Activated CD4-positive, alpha-beta memory T cell treated with anti-CD3 and anti-CD28 coated beads, Interleukin-2, amount 10 ng/mL, durations not matched to agents 7 days and 5 days (primary cell): ENCODE measurements at regions of chr12 and their contacts with region 1.

Region 1: DNA sequence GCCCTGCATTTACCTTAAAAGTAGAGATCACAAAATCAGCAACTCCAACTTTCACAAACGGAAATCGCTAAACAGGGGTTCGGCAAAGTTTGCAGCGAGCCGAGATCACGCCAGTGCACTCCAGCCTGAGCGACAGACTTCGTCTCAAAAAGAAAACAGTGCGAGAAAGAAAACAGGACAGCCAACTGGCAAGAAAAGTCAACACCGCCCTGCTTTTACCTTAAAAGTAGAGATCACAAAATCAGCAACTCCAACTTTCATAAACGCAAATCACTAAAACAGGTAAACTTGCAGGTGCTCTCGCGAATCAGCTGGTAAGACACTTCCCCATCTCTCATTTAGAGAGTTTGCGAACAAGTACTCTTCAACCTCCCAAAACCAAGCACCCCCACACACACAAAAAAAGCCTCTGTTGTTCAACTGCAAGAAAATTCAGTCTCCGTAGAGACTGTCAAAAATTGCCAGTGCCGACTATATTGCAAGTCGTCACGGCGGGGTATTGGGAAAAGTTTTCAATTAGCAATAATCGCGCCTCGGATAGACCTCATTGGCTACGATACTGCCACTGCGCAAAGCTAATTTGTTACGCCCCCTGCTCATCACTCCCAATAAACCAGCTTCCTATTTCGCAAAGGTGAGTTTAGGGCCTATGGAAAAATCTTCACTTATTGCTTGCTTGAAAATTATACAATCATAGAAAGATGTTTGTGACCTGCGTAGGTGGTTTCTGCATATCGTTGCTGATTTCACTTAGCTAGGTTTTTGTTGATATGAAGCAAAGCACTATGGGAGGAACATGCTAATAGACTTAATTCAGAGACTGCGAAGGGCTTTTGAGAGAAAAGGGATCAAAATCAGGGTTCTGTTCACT is at the start of gene RNU4-1:
- DNase-seq: peak; percentile 84
- H3K4me3 Mint-ChIP-seq: no peak within 1 kb of the TSS
- H3K27ac Mint-ChIP-seq: no peak within 1 kb of the TSS
- H3K4me1 Mint-ChIP-seq: peaks cover 12% of the 10 kb centered on the region
- H3K27me3 Mint-ChIP-seq: peaks cover 7% of the 10 kb centered on the region
- total RNA-seq, gene RNU4-1: 1,910 to 2,156 TPM

Region 2: DNA sequence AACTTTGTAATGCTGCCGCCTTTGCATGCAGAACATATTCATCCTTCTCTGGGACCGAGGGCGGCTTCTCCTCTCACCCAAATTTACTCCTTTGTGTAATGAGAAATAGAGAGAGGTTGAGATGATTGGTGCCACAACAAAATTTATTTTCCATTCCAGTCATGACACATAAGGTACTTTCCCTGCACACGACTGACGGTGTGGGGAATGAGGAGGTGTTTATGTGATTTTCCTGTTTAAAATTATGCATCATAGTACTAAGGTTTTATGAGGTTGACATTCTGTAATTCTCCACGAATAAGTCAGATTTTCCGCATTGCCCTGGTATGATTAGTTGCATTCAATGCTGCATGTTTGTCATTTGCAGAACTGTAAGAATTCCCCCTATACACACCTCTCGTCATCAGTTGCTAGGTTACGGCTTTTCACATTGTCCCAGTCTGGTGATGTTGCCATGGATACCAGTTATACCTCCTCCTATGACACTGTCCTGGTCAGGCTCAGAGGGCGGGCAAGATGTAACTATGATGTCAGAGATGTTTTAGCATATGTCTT is 280.8 kb before region 1 on chr12:
- CTCF ChIA-PET with region 1: no interaction called
- POLR2A ChIA-PET with region 1: interaction called, 19 read pairs
- DNase-seq: peak; percentile 77
- H3K4me3 Mint-ChIP-seq: peak overlapping the region; percentile 60
- H3K27ac Mint-ChIP-seq: peak overlapping the region; percentile 88
- H3K4me1 Mint-ChIP-seq: peaks cover 77% of the 10 kb centered on the region
- H3K27me3 Mint-ChIP-seq: no peaks in the 10 kb centered on the region

Region 3: DNA sequence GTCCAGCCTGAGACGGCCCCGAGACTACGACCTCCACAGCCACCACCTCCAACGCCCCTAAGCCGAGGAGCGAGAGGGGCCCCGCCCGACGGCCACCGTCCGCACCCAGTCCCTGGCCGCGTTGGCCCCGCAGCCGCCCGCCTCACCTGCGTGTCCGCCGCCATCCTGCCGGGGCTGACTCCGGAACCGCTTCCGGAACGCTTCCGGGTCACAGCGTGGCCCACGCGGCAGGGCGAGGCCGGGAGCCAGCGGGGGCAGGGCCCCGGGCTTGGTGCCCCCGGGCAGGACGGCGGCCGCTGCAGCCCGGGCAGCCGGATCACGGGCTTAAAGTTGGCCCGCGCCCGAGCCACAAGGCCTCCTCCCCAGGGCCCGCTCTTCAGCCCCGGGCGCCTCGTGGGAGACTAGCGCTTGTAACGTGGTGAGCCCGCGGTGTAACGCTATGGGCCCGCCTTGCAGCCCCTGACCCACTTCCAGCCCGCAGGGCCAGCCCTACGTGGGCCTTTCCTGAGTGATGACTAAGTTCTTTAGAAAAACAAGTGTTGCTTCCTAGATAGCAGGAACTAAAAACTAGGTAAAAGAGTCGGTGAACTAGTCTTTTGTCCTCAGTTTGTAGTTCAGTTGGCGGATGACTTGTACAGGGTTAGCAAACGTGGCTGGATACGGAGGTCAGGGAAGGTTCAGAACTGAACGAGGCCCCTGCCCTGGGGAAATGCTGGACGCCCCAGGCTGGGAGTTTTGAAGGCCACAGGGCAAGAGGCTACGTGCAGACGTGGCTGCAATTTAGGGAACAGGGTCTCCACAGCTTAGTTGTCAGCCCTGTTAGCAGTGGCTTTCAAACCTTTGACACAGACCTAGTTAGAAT is 98.1 kb before region 1 on chr12 and contains the start of gene GCN1:
- CTCF ChIA-PET with region 1: interaction called, 46 read pairs
- POLR2A ChIA-PET with region 1: interaction called, 349 read pairs
- DNase-seq: peak; percentile 89
- H3K4me3 Mint-ChIP-seq: peak within 1 kb of the TSS; percentile 87
- H3K27ac Mint-ChIP-seq: peak within 1 kb of the TSS; percentile 98
- H3K4me1 Mint-ChIP-seq: peaks cover 65% of the 10 kb centered on the region
- H3K27me3 Mint-ChIP-seq: no peaks in the 10 kb centered on the region
- total RNA-seq, gene GCN1: 86.0 to 94.3 TPM

Region 4: DNA sequence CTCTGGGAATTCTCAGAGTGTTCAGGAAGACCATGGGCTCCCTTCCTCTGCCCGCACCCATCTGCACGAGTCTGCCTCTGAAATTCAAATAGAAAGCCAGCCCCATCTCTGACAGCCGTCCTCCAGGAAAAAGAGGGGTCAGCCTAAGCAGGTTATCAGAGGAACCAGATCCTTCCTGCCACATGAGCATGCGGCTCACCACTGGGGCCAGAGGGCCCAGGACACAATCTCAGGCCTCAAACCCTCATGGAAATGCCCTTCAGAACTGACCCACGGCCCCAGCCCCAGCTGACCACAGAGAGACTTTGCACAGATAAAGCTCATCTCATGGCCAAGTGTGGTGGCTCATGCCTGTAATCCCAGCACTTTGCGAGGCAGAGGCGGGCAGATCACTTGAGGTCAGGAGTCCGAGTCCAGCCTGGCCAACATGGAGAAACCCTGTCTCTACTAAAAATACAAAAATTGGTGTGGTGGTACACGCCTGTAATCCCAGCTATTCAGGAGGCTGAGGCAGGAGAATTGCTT is 50.6 kb before region 1 on chr12:
- CTCF ChIA-PET with region 1: no interaction called
- POLR2A ChIA-PET with region 1: interaction called, 269 read pairs
- DNase-seq: no peak
- H3K4me3 Mint-ChIP-seq: no peak overlapping the region
- H3K27ac Mint-ChIP-seq: no peak overlapping the region
- H3K4me1 Mint-ChIP-seq: peaks cover 69% of the 10 kb centered on the region
- H3K27me3 Mint-ChIP-seq: no peaks in the 10 kb centered on the region

Region 5: DNA sequence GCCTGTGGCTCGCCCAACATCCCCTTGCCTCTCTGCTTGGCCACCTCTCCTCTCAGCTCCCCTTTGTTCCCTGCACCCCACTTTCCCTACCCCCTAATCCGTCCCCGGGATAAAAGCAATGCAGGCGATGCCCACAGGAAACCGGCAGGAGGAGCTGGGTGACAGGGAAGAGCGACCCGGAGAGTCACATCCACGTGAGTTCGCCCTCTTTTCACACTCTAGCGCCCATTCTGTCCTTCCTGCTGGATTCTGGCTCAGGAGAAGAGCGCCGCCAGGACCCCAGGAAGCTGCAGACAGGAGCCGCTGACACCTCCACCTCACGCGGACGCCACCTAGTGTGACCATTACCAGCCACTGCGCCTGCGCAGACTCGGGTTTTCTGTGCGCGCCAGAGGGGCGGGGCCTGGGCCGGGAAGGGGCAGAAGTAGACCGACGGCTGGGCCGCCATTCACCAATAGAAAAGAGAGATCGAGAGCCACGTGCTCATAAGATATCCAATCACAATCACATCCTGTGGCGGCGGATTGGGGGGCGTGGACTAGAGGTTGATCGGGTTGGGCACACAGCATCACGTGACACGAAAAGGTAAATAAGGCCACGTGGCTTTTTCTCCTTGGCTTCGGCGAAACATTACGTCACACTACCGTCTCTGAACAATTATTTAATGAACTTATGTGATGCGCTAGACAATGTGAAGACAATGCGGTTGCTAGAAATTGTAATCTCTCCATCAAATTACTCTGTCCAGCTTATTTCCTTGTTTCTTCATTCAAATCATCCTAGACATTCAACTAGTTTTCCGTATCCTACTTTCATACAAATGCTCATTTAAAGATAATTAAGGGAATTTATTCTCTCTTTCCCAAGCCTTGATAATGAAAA is 24.6 kb after region 1 on chr12:
- CTCF ChIA-PET with region 1: interaction called, 7 read pairs
- POLR2A ChIA-PET with region 1: interaction called, 127 read pairs
- DNase-seq: peak; percentile 100
- H3K4me3 Mint-ChIP-seq: peak overlapping the region; percentile 80
- H3K27ac Mint-ChIP-seq: peak overlapping the region; percentile 78
- H3K4me1 Mint-ChIP-seq: peaks cover 14% of the 10 kb centered on the region
- H3K27me3 Mint-ChIP-seq: no peaks in the 10 kb centered on the region

Region 6: GRCh38 chr12:120394483-120395367 is 101.8 kb after region 1 on chr12:
- CTCF ChIA-PET with region 1: no interaction called
- POLR2A ChIA-PET with region 1: no interaction called
- DNase-seq: no peak
- H3K4me3 Mint-ChIP-seq: no peak overlapping the region
- H3K27ac Mint-ChIP-seq: no peak overlapping the region
- H3K4me1 Mint-ChIP-seq: peaks cover 2% of the 10 kb centered on the region
- H3K27me3 Mint-ChIP-seq: peaks cover 24% of the 10 kb centered on the region

Region 7: GRCh38 chr12:120528861-120529525 is 236.1 kb after region 1 on chr12 and contains the start of gene COQ5:
- CTCF ChIA-PET with region 1: no interaction called
- POLR2A ChIA-PET with region 1: interaction called, 19 read pairs
- DNase-seq: peak; percentile 88
- H3K4me3 Mint-ChIP-seq: peak within 1 kb of the TSS; percentile 100
- H3K27ac Mint-ChIP-seq: peak within 1 kb of the TSS; percentile 97
- H3K4me1 Mint-ChIP-seq: peaks cover 29% of the 10 kb centered on the region
- H3K27me3 Mint-ChIP-seq: no peaks in the 10 kb centered on the region
- total RNA-seq, gene COQ5: 30.3 to 30.8 TPM